Heart left ventricle (tissue), 16 donors: ENCODE measurements at regions of chr19 and their contacts with region 1.

Region 1: DNA sequence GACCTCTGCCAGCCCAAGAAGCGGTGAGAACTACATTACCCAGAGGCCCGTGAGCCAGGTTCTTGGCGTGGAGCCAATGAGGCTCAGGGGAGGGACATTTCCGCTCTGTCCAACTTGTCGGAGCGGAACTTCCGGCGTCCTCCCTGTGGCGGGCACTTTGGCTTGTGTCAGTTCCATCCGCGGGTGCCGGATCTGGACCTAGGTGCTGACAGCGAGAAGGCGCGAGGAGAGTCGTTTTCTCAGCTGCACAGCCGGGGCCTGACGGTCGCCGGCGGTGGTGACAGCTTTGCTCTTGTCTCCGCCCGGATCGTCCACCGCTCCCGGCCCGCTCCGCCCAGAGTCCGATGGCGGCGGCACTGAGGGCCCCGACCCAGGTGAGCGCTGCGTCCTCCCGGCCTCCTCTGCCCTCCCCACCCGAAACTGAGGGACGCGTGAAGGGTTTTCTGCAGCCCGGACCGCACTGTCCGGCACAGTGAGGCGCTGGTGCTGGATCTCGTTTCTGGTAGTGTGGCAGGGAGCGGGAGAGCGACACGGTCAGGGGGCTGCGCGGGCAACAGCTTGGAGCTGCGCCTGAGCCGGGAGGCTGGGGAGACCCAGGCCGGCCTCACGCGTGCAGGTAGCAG is at the start of gene ZNF530:
- DNase-seq: peak; percentile 96 to 98 (median 97)
- ATAC-seq: peak; percentile 99 to 100 (median 99)
- H3K4me3 ChIP-seq: peak within 1 kb of the TSS; percentile 68 to 99 (median 82)
- H3K27ac ChIP-seq: peak within 1 kb of the TSS in 11 of 12 donors; percentile 22 to 80 (median 68)
- H3K4me1 ChIP-seq: peaks cover 4 to 19% (median 9%) of the 10 kb centered on the region in 12 donors
- H3K27me3 ChIP-seq: no peaks in the 10 kb centered on the region
- CTCF ChIP-seq: peak in 1 of 12 donors; percentile 21
- POLR2A ChIP-seq: peak in 1 of 2 donors; percentile 5
- total RNA-seq, gene ZNF530: 2.7 to 7.5 (median 3.9) TPM

Region 2: DNA sequence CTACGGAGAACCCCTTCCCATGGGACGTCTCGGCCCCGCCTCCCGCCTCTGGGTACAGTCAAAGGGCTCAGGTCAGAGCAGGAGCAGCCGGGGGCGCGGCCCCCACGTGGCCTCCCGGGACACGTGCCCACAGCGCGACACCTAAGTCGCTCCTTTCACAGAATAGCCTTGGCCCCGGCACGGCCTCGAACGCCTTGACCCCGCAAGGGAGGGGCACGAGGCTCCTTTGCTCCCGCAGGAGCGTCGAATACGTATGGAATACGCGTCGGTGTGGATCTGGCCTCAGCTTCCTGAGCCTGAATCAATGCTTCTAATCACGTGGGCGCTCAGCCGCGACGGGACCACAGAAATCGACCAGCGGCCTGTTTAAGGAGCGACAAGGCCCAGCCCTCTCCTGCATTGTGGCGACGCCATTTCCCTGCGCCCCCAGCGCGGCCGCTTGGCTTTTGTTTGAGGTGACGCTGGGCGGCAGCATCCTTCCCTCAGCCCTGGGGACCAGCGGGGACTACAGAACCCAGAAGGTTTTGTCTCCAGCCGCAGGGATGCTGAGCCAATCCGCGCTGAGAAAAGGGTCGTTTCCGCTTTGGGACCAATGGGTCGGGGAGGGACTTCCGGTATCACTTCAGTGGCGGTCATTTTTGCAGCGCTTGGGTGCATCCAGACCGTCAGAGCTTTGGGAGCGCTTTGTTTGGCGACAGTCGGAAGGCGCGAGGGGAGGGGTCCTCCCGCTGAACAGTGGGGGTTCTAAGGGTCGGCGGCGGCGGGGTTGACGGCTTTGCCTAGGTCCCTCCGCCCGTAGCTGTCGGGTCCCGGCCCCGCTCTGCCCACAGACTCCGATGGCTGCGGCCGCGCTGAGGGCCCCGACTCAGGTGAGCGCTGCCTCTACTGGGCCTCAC is 16.1 kb before region 1 on chr19 and contains the start of gene ZIK1:
- intact Hi-C with region 1: loop called in 2 of 10 experiments (anchors 2 kb)
- DNase-seq: peak; percentile 93 to 96 (median 95)
- ATAC-seq: peak; percentile 94 to 97 (median 96)
- H3K4me3 ChIP-seq: peak within 1 kb of the TSS; percentile 32 to 90 (median 80)
- H3K27ac ChIP-seq: peak within 1 kb of the TSS in 11 of 12 donors; percentile 41 to 84 (median 70)
- H3K4me1 ChIP-seq: peaks cover 0 to 29% (median 18%) of the 10 kb centered on the region in 12 donors
- H3K27me3 ChIP-seq: no peaks in the 10 kb centered on the region
- CTCF ChIP-seq: peak in 4 of 12 donors; percentile 23 to 44 (median 36)
- POLR2A ChIP-seq: peak in 1 of 2 donors; percentile 56
- total RNA-seq, gene ZIK1: 2.7 to 5.6 (median 4.4) TPM